PC-9 (cell line): ENCODE measurements at regions of chr20 and their contacts with region 1.

Region 1: GRCh38 chr20:45779011-45779915 is 12.4 kb downstream of the WFDC3 start:
- DNase-seq: peak; percentile 96 to 100
- H3K4me3 ChIP-seq: no peak overlapping the region; the same call in 1 of the 2 replicates
- H3K27ac ChIP-seq: peak overlapping the region; percentile 99
- H3K4me1 ChIP-seq: peaks cover 74% of the 10 kb centered on the region
- H3K27me3 ChIP-seq: no peaks in the 10 kb centered on the region
- CTCF ChIP-seq: no peak

Region 2: GRCh38 chr20:45254869-45255266 is 524.4 kb before region 1 on chr20:
- CTCF ChIA-PET with region 1: no interaction called
- POLR2A ChIA-PET with region 1: no interaction called
- intact Hi-C with region 1: loop called (anchors 1 kb)
- DNase-seq: peak in 1 of 2 experiments; percentile 95
- H3K4me3 ChIP-seq: peak overlapping the region; percentile 73; the same call in 1 of the 2 replicates
- H3K27ac ChIP-seq: peak overlapping the region; percentile 97
- H3K4me1 ChIP-seq: peaks cover 68% of the 10 kb centered on the region
- H3K27me3 ChIP-seq: no peaks in the 10 kb centered on the region
- CTCF ChIP-seq: no peak

Region 3: GRCh38 chr20:45347936-45348778 is 431.1 kb before region 1 on chr20 and contains the start of gene SDC4:
- CTCF ChIA-PET with region 1: no interaction called
- POLR2A ChIA-PET with region 1: interaction called, 3 read pairs
- intact Hi-C with region 1: loop called (anchors 2 kb)
- DNase-seq: peak; percentile 63 to 80
- H3K4me3 ChIP-seq: peak within 1 kb of the TSS; percentile 76
- H3K27ac ChIP-seq: peak within 1 kb of the TSS; percentile 92
- H3K4me1 ChIP-seq: peaks cover 44% of the 10 kb centered on the region
- H3K27me3 ChIP-seq: no peaks in the 10 kb centered on the region
- CTCF ChIP-seq: 0 out of 2 replicates have a peak, but pooled peaks have one; percentile 21
- total RNA-seq, gene SDC4: 114 and 117 TPM in 2 replicates

Region 4: GRCh38 chr20:45518282-45518681 is 261.0 kb before region 1 on chr20:
- CTCF ChIA-PET with region 1: no interaction called
- POLR2A ChIA-PET with region 1: interaction called, 8 read pairs
- intact Hi-C with region 1: loop called (anchors 1 kb)
- DNase-seq: peak; percentile 85 to 96
- H3K4me3 ChIP-seq: peak overlapping the region; percentile 4; the same call in 1 of the 2 replicates
- H3K27ac ChIP-seq: peak overlapping the region; percentile 83
- H3K4me1 ChIP-seq: peaks cover 24% of the 10 kb centered on the region
- H3K27me3 ChIP-seq: no peaks in the 10 kb centered on the region
- CTCF ChIP-seq: no peak

Region 5: DNA sequence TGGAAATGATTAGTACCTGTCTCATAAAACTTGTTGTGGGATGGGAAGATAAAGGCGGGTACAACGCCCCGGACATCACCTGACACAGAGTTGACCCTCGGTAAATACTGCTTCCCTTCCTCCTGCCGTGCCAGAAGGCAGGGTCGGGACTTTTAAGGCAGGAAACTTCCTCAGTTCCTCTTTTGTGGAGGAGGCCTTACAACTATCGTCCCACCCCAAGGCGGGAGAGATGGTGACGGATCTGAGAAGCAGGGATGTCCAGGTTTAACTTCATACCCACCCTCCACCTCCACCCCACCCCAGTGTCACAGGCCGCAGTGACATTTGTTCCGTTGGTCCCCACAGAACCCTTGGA is 13.0 kb after region 1 on chr20:
- CTCF ChIA-PET with region 1: no interaction called
- POLR2A ChIA-PET with region 1: interaction called, 22 read pairs
- intact Hi-C with region 1: no loop called
- DNase-seq: no peak
- H3K4me3 ChIP-seq: peak overlapping the region; percentile 98
- H3K27ac ChIP-seq: peak overlapping the region; percentile 56
- H3K4me1 ChIP-seq: peaks cover 27% of the 10 kb centered on the region
- H3K27me3 ChIP-seq: no peaks in the 10 kb centered on the region
- CTCF ChIP-seq: no peak

Region 6: GRCh38 chr20:45812157-45813020 is 33.1 kb after region 1 on chr20 and contains the start of gene UBE2C:
- CTCF ChIA-PET with region 1: no interaction called
- POLR2A ChIA-PET with region 1: no interaction called
- intact Hi-C with region 1: loop called (anchors 2 kb)
- DNase-seq: peak; percentile 98 to 99
- H3K4me3 ChIP-seq: peak within 1 kb of the TSS; percentile 77
- H3K27ac ChIP-seq: no peak within 1 kb of the TSS
- H3K4me1 ChIP-seq: peaks cover 38% of the 10 kb centered on the region
- H3K27me3 ChIP-seq: no peaks in the 10 kb centered on the region
- CTCF ChIP-seq: no peak
- total RNA-seq, gene UBE2C: 207 TPM in 2 replicates

Region 7: DNA sequence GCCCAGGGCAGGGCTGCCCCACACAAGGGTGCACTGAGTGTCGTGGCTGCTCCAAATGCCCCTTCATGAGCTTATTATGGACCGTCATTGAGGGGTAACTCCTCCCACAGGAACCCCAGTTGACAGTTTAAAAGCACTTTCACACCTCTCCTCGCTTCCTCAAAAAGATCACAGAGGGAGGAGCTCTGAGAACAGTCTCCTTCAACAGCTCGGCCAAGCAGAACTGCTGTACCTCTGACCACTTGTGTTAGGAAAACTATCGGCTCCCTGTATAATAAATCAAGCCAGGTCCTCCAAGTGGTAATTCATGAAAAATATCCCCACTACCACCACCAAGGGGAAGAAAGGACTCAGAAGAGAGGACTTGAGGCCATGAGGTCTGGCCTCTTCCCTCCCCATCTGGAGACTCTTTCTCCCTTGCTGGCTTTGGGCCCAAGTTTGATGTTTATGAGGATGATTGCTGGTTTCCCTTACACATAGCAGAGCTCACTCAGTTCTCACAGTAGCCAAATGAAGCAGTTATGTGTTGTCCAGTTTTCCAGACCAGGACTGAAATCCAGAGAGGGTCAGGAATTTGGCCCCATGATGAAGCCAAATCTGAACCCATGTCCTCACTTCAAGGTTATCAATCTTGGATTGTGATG is 63.0 kb after region 1 on chr20:
- CTCF ChIA-PET with region 1: no interaction called
- POLR2A ChIA-PET with region 1: no interaction called
- intact Hi-C with region 1: no loop called
- DNase-seq: no peak
- H3K4me3 ChIP-seq: no peak overlapping the region
- H3K27ac ChIP-seq: no peak overlapping the region
- H3K4me1 ChIP-seq: no peaks in the 10 kb centered on the region
- H3K27me3 ChIP-seq: no peaks in the 10 kb centered on the region
- CTCF ChIP-seq: no peak

Region 8: GRCh38 chr20:45971675-45972499 is 192.6 kb after region 1 on chr20 and contains the start of gene ZNF335:
- CTCF ChIA-PET with region 1: interaction called, 5 read pairs
- POLR2A ChIA-PET with region 1: interaction called, 20 read pairs
- intact Hi-C with region 1: no loop called
- DNase-seq: peak; percentile 91 to 98
- H3K4me3 ChIP-seq: peak within 1 kb of the TSS; percentile 79
- H3K27ac ChIP-seq: peak within 1 kb of the TSS; percentile 98
- H3K4me1 ChIP-seq: peaks cover 24% of the 10 kb centered on the region
- H3K27me3 ChIP-seq: no peaks in the 10 kb centered on the region
- CTCF ChIP-seq: peak; percentile 60
- total RNA-seq, gene ZNF335: 14.1 and 16.3 TPM in 2 replicates